ENCODE measurements at regions of chr11 and their contacts with region 1.

Region 1: GRCh38 chr11:86802601-86803051 is 2.3 kb downstream of the PRSS23 start:
- DNase-seq: peak; percentile 25
- H3K4me3 Mint-ChIP-seq: peak overlapping the region; percentile 74
- H3K27ac Mint-ChIP-seq: no peak overlapping the region
- H3K4me1 Mint-ChIP-seq: peaks cover 10% of the 10 kb centered on the region
- H3K27me3 Mint-ChIP-seq: no peaks in the 10 kb centered on the region
- CTCF ChIP-seq: no peak

Region 2: DNA sequence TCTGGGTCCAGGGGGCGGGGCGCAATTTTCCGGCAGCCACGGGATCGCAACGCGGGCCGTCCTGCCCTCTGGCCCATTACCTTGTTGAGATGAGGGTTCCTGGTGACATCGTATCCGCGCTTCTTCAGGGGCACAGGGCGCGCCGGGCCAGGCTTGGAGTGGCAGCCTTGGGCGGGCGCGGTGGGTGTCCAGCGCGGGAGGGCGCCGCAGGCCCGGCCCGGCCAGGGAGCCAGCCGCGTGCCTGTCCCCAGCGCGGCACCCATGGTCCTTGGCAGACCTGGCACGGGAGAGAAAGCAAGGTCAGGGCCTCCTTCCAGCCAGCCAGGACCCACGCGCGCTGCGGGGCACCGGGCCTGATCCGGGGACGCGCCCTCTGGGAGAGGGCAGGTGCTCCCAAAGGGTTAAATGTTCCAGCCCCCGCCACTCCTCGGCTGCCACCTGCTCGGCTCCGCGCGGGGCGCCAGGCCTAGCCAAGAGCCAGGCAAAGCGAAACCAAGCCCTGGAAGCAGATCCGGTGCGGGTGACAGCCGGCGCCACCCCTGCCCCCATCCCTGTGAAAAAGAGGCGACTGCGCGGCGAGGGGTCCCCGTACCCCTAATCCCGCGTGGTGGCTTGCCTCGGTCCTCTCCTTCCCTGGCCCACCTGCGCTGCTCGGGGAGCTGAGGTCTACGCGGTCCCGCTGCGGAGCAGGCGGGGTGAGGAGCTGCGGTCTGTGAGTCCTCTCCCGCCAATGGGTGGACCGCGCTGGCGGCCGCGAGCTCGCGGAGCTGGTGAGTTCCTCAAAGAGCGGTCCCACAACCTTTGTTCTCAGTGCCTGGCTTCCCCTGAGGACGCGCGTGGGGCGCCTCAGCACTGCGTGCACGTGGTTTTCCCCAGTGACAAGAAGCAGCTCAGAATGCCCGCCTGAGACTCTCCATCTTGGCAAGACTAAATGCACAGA is 130.7 kb before region 1 on chr11 and contains the start of gene ME3:
- CTCF ChIA-PET with region 1: interaction called, 6 read pairs
- intact Hi-C with region 1: loop called (anchors 2 kb)
- DNase-seq: peak; percentile 71
- H3K4me3 Mint-ChIP-seq: peak within 1 kb of the TSS; percentile 85
- H3K27ac Mint-ChIP-seq: peak within 1 kb of the TSS; percentile 85
- H3K4me1 Mint-ChIP-seq: peaks cover 33% of the 10 kb centered on the region
- H3K27me3 Mint-ChIP-seq: no peaks in the 10 kb centered on the region
- CTCF ChIP-seq: no peak
- total RNA-seq, gene ME3: 13.3 and 14.2 TPM in 2 replicates

Region 3: DNA sequence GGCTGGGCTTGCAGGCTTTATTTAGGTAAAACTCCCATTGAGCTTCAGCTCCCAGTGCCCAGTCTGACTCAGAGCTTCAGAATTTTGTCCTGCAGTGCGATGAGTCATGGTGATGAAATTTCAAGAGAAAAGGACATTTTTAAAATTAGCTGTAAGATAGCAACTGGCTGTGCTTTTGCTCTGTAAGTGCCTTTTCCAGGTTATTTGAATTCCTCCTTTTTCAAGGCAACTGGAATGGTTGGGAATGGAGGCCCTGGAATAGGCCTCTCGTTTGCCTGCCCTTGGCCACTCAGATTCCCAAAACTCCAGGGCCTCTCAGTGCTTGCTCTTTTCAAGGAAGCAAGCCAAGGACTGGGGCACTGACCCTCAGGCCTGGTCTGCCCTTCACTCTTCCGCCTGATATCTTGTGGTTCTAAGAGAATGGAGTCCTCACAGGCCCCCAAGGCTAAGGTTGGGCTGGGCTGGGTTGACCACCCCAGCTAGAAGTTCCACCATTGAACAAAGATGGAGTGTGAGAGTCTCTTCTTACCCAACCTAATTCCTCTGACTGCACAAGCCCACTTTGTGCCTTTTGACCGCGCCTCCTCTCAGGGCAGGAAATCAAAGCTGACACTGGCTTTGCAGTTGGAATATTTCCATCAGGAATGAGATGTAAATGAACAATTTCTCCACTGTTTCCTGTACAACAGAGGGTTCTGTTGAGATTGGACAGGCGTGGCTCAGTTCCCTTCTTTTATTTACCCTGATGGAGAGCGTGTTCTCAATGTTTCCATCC is 61.7 kb before region 1 on chr11:
- CTCF ChIA-PET with region 1: no interaction called
- intact Hi-C with region 1: loop called (anchors 5 kb)
- DNase-seq: peak; percentile 48
- H3K4me3 Mint-ChIP-seq: peak overlapping the region; percentile 45
- H3K27ac Mint-ChIP-seq: peak overlapping the region; percentile 95
- H3K4me1 Mint-ChIP-seq: peaks cover 71% of the 10 kb centered on the region
- H3K27me3 Mint-ChIP-seq: no peaks in the 10 kb centered on the region
- CTCF ChIP-seq: no peak

Measured in Calu3 (cell line).